ENCODE measurements at regions of chr18 and their contacts with region 1.

Region 1: DNA sequence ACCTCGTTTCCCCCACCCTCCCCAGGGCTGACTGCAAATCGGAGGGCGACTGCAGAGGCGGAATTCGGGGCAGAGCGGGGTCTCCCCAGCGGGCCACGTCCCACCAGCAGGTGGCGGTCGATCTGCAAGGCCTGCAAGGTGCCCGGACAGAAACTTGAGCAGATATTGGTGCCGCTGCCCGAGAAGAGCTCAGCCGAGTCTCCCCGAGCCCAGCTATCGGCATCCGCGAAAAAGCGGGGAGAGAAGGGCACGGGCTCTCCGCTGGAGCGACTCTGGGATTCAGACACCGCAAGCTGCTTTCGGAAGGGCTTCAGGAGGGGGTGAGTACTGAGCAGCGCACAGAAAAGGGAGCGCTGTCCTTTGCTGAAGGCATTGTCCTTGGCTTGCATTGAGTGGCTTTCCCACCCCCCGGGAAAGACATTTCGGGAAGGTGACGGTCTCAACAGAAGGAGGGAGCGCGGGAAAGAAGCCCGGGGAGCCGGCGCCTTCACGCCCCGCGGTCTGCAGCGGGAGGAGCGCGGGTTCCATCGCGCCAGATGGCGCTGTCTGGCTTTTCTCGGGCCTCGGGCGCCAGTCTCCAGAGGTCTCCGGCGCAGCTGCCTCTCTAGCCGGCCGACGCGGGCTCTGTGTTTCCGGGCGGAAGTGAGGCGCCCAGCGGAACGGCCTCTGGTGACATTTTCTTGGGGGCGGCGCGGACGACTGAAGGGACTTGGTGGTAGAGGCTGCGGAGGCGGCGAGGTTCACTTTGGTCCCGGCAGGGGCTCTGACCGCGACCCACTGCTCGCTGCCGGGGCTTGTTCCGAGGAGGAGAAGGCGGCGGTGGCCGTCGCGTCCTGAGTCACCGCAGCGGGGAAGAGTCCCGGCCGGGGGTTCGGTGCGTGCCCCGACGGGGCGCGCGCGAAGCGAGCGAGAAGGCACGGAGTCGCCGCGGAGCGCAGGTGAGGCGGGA is 69.5 kb downstream of the HAUS1 start:
- DNase-seq: peak; percentile 89 to 95 (median 95)
- ATAC-seq: peak; percentile 88
- H3K4me3 ChIP-seq: peak overlapping the region; percentile 85 to 100
- H3K4me3 Mint-ChIP-seq: peak overlapping the region; percentile 99
- H3K27ac ChIP-seq: peak overlapping the region; percentile 80 to 83
- H3K27ac Mint-ChIP-seq: peak overlapping the region; percentile 97
- H3K4me1 ChIP-seq: peaks cover 34% of the 10 kb centered on the region
- H3K4me1 Mint-ChIP-seq: peaks cover 38% of the 10 kb centered on the region
- H3K27me3 ChIP-seq: no peaks in the 10 kb centered on the region
- H3K27me3 Mint-ChIP-seq: no peaks in the 10 kb centered on the region
- CTCF ChIP-seq: peak; percentile 99

Region 2: GRCh38 chr18:45722899-45723298 is 450.8 kb before region 1 on chr18:
- CTCF ChIA-PET with region 1: no interaction called
- POLR2A ChIA-PET with region 1: no interaction called
- intact Hi-C with region 1: no loop called
- DNase-seq: peak; percentile 33 to 77 (median 58)
- ATAC-seq: peak; percentile 73
- H3K4me3 ChIP-seq: no peak overlapping the region
- H3K4me3 Mint-ChIP-seq: no peak overlapping the region
- H3K27ac ChIP-seq: no peak overlapping the region
- H3K27ac Mint-ChIP-seq: no peak overlapping the region
- H3K4me1 ChIP-seq: no peaks in the 10 kb centered on the region
- H3K4me1 Mint-ChIP-seq: no peaks in the 10 kb centered on the region
- H3K27me3 ChIP-seq: no peaks in the 10 kb centered on the region
- H3K27me3 Mint-ChIP-seq: peaks cover 2% of the 10 kb centered on the region
- CTCF ChIP-seq: peak; percentile 67

Region 3: DNA sequence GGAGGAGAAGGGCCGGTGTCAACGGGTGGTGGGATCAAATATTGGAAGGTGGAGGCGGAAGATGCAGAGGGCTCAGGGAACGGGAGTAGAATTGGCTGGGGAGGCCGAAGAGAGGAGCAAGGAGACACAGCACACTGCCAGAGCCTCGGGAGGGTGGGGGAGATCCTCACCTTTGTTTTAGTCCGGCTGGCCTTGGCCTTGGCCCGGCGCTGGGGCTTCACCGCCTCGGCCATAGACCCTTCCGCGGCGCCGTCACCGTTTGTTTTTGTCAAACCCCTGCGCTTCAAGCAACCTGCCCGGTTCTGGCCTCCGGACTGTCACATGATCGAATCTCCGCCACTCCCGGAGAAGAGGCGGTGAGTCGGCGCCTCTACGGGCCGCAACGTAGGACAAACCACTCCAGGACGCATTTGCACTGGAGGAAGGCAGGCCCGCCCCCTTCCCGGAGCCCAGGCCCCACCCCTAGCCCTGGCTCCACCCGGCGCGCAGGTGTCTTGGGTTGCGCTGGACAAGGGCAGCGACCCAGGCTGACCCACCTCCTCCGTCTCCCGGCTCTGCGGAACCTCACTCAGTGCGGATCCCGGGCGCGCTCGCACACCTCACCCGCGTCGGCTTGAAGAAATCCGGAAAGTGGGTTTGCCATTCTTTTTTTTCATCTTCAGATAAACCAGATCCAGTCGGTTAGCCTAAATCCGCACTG is 206.5 kb before region 1 on chr18 and contains the start of gene EPG5:
- CTCF ChIA-PET with region 1: no interaction called
- POLR2A ChIA-PET with region 1: no interaction called
- intact Hi-C with region 1: loop called in 1 of 2 experiments (anchors 2 kb)
- DNase-seq: peak; percentile 75 to 94 (median 90)
- ATAC-seq: peak; percentile 91
- H3K4me3 ChIP-seq: peak within 1 kb of the TSS; percentile 79 to 91
- H3K4me3 Mint-ChIP-seq: peak within 1 kb of the TSS; percentile 98
- H3K27ac ChIP-seq: peak within 1 kb of the TSS; percentile 68 to 74
- H3K27ac Mint-ChIP-seq: peak within 1 kb of the TSS; percentile 91
- H3K4me1 ChIP-seq: peaks cover 33% of the 10 kb centered on the region
- H3K4me1 Mint-ChIP-seq: peaks cover 46% of the 10 kb centered on the region
- H3K27me3 ChIP-seq: no peaks in the 10 kb centered on the region
- H3K27me3 Mint-ChIP-seq: no peaks in the 10 kb centered on the region
- CTCF ChIP-seq: no peak
- total RNA-seq, gene EPG5: 29.1 to 35.5 TPM

Region 4: GRCh38 chr18:46148810-46149209 is 24.9 kb before region 1 on chr18:
- CTCF ChIA-PET with region 1: interaction called, 29 read pairs
- POLR2A ChIA-PET with region 1: no interaction called
- intact Hi-C with region 1: loop called in 1 of 2 experiments (anchors 1 kb)
- DNase-seq: peak in 7 of 9 experiments; percentile 19 to 68 (median 54)
- ATAC-seq: peak; percentile 66
- H3K4me3 ChIP-seq: no peak overlapping the region
- H3K4me3 Mint-ChIP-seq: no peak overlapping the region
- H3K27ac ChIP-seq: no peak overlapping the region
- H3K27ac Mint-ChIP-seq: no peak overlapping the region
- H3K4me1 ChIP-seq: peaks cover 41% of the 10 kb centered on the region
- H3K4me1 Mint-ChIP-seq: peaks cover 40% of the 10 kb centered on the region
- H3K27me3 ChIP-seq: no peaks in the 10 kb centered on the region
- H3K27me3 Mint-ChIP-seq: no peaks in the 10 kb centered on the region
- CTCF ChIP-seq: peak; percentile 82

Region 5: DNA sequence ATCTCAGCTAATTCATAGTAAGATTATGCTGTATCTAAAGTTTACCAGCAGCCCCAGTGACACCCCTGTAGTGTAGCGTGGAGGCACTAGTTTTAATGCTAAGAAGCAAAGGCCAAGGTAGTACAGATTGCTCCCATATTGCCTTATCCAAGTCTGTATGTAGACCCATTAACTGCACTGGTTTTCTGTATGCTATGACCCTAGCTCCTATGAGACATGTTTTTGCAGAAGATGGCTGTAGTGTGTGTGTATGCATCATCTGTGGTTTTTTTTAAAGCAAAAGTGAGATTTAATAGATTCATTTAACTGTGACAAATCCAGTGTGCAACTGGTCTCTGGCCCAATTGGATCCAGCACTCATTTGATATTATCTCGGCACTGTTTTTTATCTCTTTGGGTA is 17.0 kb after region 1 on chr18:
- CTCF ChIA-PET with region 1: interaction called, 10 read pairs
- POLR2A ChIA-PET with region 1: interaction called, 3 read pairs
- intact Hi-C with region 1: no loop called
- DNase-seq: no peak
- ATAC-seq: no peak
- H3K4me3 ChIP-seq: no peak overlapping the region
- H3K4me3 Mint-ChIP-seq: no peak overlapping the region
- H3K27ac ChIP-seq: no peak overlapping the region
- H3K27ac Mint-ChIP-seq: no peak overlapping the region
- H3K4me1 ChIP-seq: peaks cover 3% of the 10 kb centered on the region
- H3K4me1 Mint-ChIP-seq: peaks cover 35% of the 10 kb centered on the region
- H3K27me3 ChIP-seq: no peaks in the 10 kb centered on the region
- H3K27me3 Mint-ChIP-seq: no peaks in the 10 kb centered on the region
- CTCF ChIP-seq: no peak

Region 6: DNA sequence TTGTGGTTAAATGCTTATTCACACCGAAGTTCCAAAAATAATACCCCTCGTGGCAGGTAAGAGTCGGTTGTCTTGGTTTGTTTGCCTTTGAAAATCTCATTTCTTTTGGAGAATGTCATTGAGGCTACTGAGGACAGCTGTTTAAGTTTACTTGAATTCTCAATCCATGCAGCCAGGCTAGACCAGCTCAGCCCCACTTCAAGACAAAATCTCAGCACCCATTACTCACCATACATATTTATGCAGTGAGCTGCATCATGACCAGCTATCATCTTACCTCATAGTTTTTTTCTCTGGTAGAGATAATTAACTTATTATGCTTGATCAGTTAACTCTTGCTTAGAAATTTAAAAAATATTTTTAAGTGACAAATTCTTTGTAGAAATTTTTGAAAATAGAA is 46.4 kb after region 1 on chr18:
- CTCF ChIA-PET with region 1: interaction called, 19 read pairs
- POLR2A ChIA-PET with region 1: interaction called, 5 read pairs
- intact Hi-C with region 1: no loop called
- DNase-seq: no peak
- ATAC-seq: no peak
- H3K4me3 ChIP-seq: no peak overlapping the region
- H3K4me3 Mint-ChIP-seq: no peak overlapping the region
- H3K27ac ChIP-seq: no peak overlapping the region
- H3K27ac Mint-ChIP-seq: no peak overlapping the region
- H3K4me1 ChIP-seq: peaks cover 38% of the 10 kb centered on the region
- H3K4me1 Mint-ChIP-seq: peaks cover 87% of the 10 kb centered on the region
- H3K27me3 ChIP-seq: no peaks in the 10 kb centered on the region
- H3K27me3 Mint-ChIP-seq: no peaks in the 10 kb centered on the region
- CTCF ChIP-seq: no peak

Region 7: GRCh38 chr18:46281185-46282176 is 107.8 kb after region 1 on chr18:
- CTCF ChIA-PET with region 1: interaction called, 11 read pairs
- POLR2A ChIA-PET with region 1: no interaction called
- intact Hi-C with region 1: no loop called
- DNase-seq: peak; percentile 10 to 66 (median 56)
- ATAC-seq: peak; percentile 93
- H3K4me3 ChIP-seq: no peak overlapping the region
- H3K4me3 Mint-ChIP-seq: no peak overlapping the region
- H3K27ac ChIP-seq: no peak overlapping the region
- H3K27ac Mint-ChIP-seq: no peak overlapping the region
- H3K4me1 ChIP-seq: no peaks in the 10 kb centered on the region
- H3K4me1 Mint-ChIP-seq: peaks cover 13% of the 10 kb centered on the region
- H3K27me3 ChIP-seq: no peaks in the 10 kb centered on the region
- H3K27me3 Mint-ChIP-seq: no peaks in the 10 kb centered on the region
- CTCF ChIP-seq: peak; percentile 81

Region 8: GRCh38 chr18:46622999-46623398 is 449.3 kb after region 1 on chr18:
- CTCF ChIA-PET with region 1: interaction called, 12 read pairs
- POLR2A ChIA-PET with region 1: interaction called, 9 read pairs
- intact Hi-C with region 1: loop called in 1 of 2 experiments (anchors 1 kb)
- DNase-seq: peak in 1 of 9 experiments; percentile 17
- ATAC-seq: no peak
- H3K4me3 ChIP-seq: no peak overlapping the region
- H3K4me3 Mint-ChIP-seq: peak overlapping the region; percentile 26
- H3K27ac ChIP-seq: peak overlapping the region in 1 of 2 experiments; percentile 34
- H3K27ac Mint-ChIP-seq: peak overlapping the region; percentile 92
- H3K4me1 ChIP-seq: peaks cover 35% of the 10 kb centered on the region
- H3K4me1 Mint-ChIP-seq: peaks cover 50% of the 10 kb centered on the region
- H3K27me3 ChIP-seq: no peaks in the 10 kb centered on the region
- H3K27me3 Mint-ChIP-seq: no peaks in the 10 kb centered on the region
- CTCF ChIP-seq: no peak

Measured in CD8-positive, alpha-beta T cell (primary cell).